AG04450 (cell line): ENCODE measurements at regions of chr2 and their contacts with region 1.

Region 1: DNA sequence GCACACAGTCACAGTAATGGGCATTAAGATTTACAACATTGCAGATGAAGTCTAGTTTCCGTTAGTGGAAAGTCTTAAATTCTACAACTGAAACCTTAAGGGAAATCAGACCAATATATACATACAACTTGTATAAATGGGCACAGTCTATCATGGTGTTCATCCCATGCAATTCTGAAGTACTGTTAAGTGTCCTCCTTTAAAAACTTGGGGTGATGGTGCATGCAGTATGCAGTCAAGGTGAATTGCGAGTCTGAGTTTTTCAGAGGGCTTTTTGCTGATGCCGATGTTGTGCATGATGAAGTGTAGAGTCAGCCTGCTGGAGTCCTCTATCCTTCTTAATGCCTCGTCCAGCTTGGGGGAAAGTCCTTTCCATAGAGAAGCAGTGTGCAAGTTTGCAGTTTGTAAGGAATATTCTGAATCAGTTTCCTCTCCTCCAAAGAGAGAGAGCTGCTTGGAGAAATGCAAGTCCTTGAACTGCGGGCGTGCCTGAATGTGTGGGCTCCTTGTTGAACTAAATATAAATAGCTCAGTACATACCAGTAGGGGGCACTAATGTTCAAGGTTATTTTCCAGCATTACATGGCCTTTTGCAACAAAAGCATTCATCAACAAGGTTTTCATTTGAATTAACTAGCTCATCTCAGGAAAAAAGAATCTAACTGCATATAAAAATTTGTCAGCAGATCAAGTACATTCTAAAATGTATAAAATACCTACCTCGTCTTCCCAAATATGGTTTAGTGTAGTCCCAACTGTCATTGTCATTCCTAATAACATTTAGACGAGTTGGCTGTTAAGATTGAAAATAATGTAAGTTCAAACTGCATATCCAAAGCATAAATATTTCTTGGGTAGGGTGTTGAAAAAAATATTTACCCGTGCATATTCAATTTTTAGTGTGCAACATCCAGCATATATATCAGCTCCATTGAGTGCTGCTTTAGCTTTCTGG is 21.3 kb downstream of the HNRNPLL start:
- DNase-seq: peak; percentile 57
- H3K4me3 ChIP-seq: no peak overlapping the region
- H3K27ac ChIP-seq: no peak overlapping the region
- H3K27me3 ChIP-seq: no peaks in the 10 kb centered on the region
- CTCF ChIP-seq: peak; percentile 66

Region 2: DNA sequence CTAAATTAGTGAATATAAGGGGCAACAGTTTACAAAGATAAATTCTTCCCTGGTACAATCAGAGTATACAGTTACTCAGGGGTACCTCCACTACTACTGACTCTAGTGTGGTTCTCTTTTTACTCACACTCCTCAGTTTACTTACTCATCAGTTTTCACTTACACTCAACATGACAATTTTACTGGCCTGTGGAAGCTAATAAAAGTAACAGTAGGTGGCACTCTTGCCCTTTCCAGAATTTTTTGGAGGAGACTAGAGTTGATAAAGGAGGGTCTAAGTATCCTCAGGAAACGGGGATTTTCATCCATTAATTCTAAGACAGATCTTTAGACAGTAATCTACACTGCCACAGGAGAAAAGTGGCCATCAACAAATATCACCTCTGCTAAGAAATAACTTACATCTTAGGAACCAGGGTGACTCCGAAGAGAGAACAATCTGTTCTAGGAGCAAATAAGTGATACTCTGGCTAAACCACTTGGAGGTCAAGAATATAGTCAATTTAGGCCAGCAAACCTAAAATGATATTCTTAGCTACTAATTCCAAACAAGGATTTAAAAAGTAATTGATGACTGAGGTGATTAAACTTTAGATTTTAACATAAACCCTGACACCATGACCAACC is 265.6 kb before region 1 on chr2:
- CTCF ChIA-PET with region 1: interaction called, 24 read pairs
- POLR2A ChIA-PET with region 1: no interaction called
- DNase-seq: no peak
- H3K4me3 ChIP-seq: no peak overlapping the region
- H3K27ac ChIP-seq: no peak overlapping the region
- H3K27me3 ChIP-seq: no peaks in the 10 kb centered on the region
- CTCF ChIP-seq: peak; percentile 84

Region 3: DNA sequence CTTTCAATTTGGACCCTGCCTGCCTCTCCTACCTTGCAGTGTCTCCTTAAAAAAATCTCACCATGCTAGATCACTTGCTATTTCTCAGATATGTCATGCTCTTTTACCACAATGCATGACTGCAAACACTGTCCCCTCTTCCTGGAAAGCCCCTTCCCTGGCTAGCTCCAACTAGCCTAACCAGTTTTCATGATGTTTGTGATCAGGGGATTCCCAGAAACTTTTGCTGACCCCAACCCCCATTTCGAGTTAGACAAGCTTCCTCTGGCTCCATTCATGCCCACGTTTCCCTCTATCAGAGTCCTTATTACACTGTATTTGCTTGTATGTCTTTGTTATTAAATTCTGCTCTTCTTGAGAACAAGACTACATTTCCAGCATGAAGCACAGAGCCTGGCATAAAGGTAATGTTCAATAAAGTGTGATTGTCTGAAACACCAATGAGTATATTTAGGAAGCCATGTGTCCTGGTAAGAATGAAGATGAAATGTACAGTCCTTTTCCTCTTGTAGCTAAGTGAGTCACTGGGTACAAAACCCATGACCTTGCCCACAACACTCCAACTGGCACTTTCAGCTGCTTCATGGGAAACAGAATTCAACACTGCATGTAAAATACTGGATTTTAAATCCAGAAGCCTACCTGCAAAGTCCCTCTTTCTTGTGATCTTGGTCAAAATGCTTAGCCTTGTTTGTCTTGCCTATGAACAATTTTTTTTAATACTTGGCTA is 142.4 kb before region 1 on chr2:
- CTCF ChIA-PET with region 1: no interaction called
- POLR2A ChIA-PET with region 1: no interaction called
- DNase-seq: no peak
- H3K4me3 ChIP-seq: no peak overlapping the region
- H3K27ac ChIP-seq: no peak overlapping the region
- H3K27me3 ChIP-seq: peaks cover 48% of the 10 kb centered on the region
- CTCF ChIP-seq: no peak

Region 4: DNA sequence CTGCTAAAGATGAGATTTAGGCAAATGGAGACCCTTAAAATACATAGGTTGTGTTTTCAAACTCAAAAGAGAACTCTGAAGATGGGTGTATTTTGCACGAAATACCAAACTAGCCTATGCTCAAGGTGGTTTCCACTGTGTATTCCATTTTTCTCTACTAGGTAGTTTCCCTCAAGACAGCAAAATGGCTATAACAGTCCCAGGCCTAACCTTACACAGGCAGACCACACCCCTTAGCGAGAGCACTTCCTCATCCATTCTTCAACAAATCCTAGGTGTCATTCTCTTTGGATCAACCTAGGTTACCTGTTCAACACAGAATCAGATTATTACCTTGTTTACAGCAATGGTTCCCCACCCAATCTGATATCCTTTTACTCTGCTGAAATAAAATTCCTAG is 21.4 kb before region 1 on chr2:
- CTCF ChIA-PET with region 1: interaction called, 36 read pairs
- POLR2A ChIA-PET with region 1: interaction called, 4 read pairs
- DNase-seq: no peak
- H3K4me3 ChIP-seq: no peak overlapping the region
- H3K27ac ChIP-seq: no peak overlapping the region
- H3K27me3 ChIP-seq: no peaks in the 10 kb centered on the region
- CTCF ChIP-seq: no peak

Region 5: GRCh38 chr2:38597115-38597514 is 15.6 kb after region 1 on chr2:
- CTCF ChIA-PET with region 1: interaction called, 14 read pairs
- POLR2A ChIA-PET with region 1: interaction called, 9 read pairs
- DNase-seq: no peak
- H3K4me3 ChIP-seq: no peak overlapping the region
- H3K27ac ChIP-seq: no peak overlapping the region
- H3K27me3 ChIP-seq: no peaks in the 10 kb centered on the region
- CTCF ChIP-seq: no peak

Region 6: GRCh38 chr2:38720613-38721241 is 139.3 kb after region 1 on chr2:
- CTCF ChIA-PET with region 1: interaction called, 49 read pairs
- POLR2A ChIA-PET with region 1: no interaction called
- DNase-seq: peak; percentile 94
- H3K4me3 ChIP-seq: no peak overlapping the region
- H3K27ac ChIP-seq: peak overlapping the region; percentile 59
- H3K27me3 ChIP-seq: no peaks in the 10 kb centered on the region
- CTCF ChIP-seq: no peak

Region 7: GRCh38 chr2:38734299-38735058 is 153.0 kb after region 1 on chr2:
- CTCF ChIA-PET with region 1: interaction called, 12 read pairs
- POLR2A ChIA-PET with region 1: no interaction called
- DNase-seq: no peak
- H3K4me3 ChIP-seq: no peak overlapping the region
- H3K27ac ChIP-seq: no peak overlapping the region
- H3K27me3 ChIP-seq: no peaks in the 10 kb centered on the region
- CTCF ChIP-seq: no peak